Posterior vena cava (tissue), 2 donors: ENCODE measurements at regions of chr9 and their contacts with region 1.

Region 1: DNA sequence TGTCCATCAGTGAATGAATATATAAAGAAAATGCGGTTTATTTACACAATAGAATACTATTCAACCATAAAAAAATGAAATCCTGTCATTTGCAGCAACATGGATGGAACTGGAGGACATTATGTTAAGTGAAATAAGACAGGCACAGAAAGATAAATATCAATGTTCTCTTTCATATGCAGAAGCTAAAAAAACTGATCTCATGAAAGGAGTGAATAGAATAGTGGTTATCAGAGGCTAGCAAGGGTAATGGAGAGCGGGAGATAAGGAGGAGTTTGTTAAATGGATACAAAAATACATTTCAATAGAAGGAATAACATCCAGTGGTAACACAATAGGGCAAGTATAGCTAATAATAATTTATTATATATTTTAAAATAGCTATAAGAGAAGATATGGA is 65.0 kb downstream of the AGTPBP1 start:
- DNase-seq: no peak

Region 2: DNA sequence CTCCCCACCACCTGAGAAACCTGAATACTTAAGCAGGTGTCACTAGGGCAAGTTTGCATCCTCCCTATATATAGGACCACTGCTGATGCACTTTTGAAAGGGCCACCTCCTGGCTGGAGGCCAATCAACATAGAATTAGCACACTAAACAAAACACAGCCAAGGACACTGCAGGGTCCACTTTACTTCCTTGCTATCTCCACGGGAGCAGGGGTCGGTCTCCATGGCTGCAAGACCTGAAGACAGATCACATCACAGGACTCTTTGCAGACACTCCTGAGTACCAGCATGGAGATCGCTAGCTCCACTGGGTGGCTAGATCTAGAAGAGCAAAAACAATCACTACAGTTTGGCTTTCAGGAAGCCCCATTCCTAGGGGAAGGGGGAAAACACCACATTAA is 510.3 kb after region 1 on chr9:
- intact Hi-C with region 1: loop called in 1 of 2 experiments (anchors 5 kb)
- DNase-seq: no peak